CD4-positive, alpha-beta memory T cell (primary cell): ENCODE measurements at regions of chr1 and their contacts with region 1.

Region 1: GRCh38 chr1:244297616-244298015 is 154.1 kb downstream of the ADSS2 start:
- DNase-seq: no peak
- H3K4me3 ChIP-seq: no peak overlapping the region
- H3K4me3 Mint-ChIP-seq: peak overlapping the region in 2 of 8 donors; percentile 6 to 42
- H3K27ac ChIP-seq: no peak overlapping the region
- H3K27ac Mint-ChIP-seq: peak overlapping the region in 1 of 7 donors; percentile 57
- H3K4me1 ChIP-seq: peaks cover 10% of the 10 kb centered on the region
- H3K4me1 Mint-ChIP-seq: peaks cover 6 to 10% (median 7%) of the 10 kb centered on the region in 4 donors
- H3K27me3 ChIP-seq: no peaks in the 10 kb centered on the region
- H3K27me3 Mint-ChIP-seq: no peaks in the 10 kb centered on the region

Region 2: DNA sequence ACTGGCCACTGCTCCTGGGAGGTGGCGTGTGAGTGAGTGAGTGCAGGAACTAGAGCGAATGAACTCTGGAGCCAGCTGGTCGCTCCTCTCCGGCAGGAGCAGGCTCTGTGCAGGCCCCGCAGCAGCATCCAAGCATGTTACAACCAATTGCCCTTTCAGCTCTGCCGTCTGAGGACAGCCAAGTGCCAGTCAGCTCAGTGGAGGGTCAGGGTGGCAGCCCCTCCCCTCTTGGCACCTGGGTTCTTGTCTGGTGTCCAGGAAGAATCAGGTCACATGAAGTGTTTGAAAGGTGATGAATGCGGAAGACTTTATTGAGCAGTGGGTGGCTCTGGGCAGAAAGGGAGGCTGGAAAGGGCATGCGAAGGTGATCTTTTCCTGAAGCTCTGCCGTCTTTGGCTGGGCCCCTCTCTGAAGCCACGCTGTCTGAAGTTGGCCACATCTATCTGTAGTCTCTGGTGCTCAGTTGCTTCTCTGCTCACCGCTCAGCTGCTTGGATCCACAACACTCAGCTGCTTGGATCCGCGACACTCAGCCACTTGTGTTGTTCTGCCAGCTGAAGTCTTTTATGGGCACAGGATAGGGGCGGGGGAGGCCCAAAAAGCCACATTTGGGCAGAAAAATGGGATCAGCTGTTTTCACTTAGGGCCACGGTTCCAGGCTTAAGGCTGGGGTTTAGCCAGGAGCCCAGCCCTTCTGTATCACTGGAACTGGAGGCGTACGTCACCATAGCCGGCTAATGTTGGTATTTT is 14.3 kb after region 1 on chr1:
- CTCF ChIA-PET with region 1: interaction called, 16 read pairs
- POLR2A ChIA-PET with region 1: no interaction called
- intact Hi-C with region 1: no loop called
- DNase-seq: no peak
- H3K4me3 ChIP-seq: no peak overlapping the region
- H3K4me3 Mint-ChIP-seq: no peak overlapping the region
- H3K27ac ChIP-seq: no peak overlapping the region
- H3K27ac Mint-ChIP-seq: peak overlapping the region in 1 of 7 donors; percentile 39
- H3K4me1 ChIP-seq: no peaks in the 10 kb centered on the region
- H3K4me1 Mint-ChIP-seq: peaks cover 0 to 6% (median 2%) of the 10 kb centered on the region in 4 donors
- H3K27me3 ChIP-seq: no peaks in the 10 kb centered on the region
- H3K27me3 Mint-ChIP-seq: no peaks in the 10 kb centered on the region